ENCODE measurements at regions of chr12 and their contacts with region 1.

Region 1: DNA sequence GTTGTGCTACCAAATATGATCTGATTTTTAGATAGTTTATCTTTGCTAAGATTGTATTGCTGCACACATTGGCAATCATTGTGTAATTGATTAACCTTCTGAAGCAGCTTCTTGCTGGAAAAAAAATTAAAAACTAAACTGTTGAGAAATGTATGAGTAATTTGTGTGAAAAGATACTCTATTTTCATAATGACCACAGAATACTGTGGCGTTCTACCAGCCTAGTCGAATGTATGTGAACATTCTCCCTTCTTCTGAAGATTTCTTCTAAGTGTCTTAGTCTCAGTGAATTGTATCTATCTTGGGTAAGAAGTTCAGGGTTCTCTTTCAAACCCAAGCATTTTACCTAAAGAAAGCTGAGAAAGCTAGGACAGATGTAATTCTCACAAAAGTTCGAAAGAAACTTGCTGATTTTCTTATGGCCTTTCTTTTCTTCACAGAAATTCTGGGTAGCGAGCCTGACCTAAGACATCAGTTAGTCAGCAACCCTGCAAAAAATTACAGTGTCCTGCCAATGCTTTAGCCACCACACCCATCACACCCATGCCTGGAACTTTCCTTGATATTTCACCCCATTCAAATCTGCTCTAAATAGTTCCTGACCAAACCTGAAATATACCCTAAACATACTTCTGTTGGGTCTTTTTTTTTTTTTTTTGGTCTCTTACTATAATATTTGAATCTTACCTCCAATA is 27.1 kb upstream of the C12orf71 start:
- DNase-seq: peak in 1 of 2 experiments; percentile 5
- H3K4me3 ChIP-seq: no peak overlapping the region
- H3K27ac ChIP-seq: no peak overlapping the region
- H3K4me1 ChIP-seq: peaks cover 20% of the 10 kb centered on the region; the same call in 1 of the 2 replicates
- H3K27me3 ChIP-seq: no peaks in the 10 kb centered on the region
- CTCF ChIP-seq: no peak

Region 2: GRCh38 chr12:27083861-27084394 is 25.6 kb before region 1 on chr12:
- CTCF ChIA-PET with region 1: no interaction called
- POLR2A ChIA-PET with region 1: no interaction called
- intact Hi-C with region 1: loop called (anchors 2 kb)
- DNase-seq: no peak
- H3K4me3 ChIP-seq: no peak overlapping the region
- H3K27ac ChIP-seq: no peak overlapping the region
- H3K4me1 ChIP-seq: peaks cover 7% of the 10 kb centered on the region
- H3K27me3 ChIP-seq: no peaks in the 10 kb centered on the region
- CTCF ChIP-seq: no peak